ENCODE measurements at regions of chr1 and their contacts with region 1.

Region 1: DNA sequence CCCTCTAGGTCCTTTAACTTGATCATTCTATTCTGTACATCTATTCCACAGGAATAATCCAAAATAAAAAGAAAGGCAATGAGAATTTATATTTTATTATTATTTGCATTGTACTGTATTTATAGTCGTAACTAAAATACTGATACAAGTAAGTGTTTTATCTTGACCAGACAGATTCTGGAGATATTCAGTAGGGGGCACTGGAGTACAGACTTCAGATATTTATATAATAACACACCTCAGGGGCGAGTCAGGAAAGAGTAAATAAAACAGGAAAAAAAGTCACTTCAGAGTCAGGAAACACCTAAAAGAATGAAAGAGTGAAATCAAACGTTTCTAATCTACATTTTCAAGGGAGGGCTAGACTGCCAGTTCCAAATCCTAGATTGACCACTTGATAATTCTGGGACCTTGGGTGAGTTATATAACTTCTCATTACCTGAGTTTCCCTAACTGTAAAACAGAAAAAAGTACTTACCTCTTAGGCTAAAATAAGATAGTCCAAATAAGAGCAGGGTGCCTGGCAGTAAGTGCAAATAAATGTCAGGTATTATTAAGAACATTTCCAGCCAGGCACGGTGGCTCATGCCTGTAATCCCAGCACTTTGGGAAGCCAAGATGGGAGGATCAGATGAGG is 31.1 kb upstream of the MTF1 start:
- DNase-seq: peak; percentile 69 to 80 (median 77)
- H3K4me3 ChIP-seq: no peak overlapping the region
- H3K27ac ChIP-seq: no peak overlapping the region
- H3K4me1 ChIP-seq: peaks cover 0 to 17% (median 3%) of the 10 kb centered on the region in 4 experiments
- H3K27me3 ChIP-seq: no peaks in the 10 kb centered on the region

Region 2: DNA sequence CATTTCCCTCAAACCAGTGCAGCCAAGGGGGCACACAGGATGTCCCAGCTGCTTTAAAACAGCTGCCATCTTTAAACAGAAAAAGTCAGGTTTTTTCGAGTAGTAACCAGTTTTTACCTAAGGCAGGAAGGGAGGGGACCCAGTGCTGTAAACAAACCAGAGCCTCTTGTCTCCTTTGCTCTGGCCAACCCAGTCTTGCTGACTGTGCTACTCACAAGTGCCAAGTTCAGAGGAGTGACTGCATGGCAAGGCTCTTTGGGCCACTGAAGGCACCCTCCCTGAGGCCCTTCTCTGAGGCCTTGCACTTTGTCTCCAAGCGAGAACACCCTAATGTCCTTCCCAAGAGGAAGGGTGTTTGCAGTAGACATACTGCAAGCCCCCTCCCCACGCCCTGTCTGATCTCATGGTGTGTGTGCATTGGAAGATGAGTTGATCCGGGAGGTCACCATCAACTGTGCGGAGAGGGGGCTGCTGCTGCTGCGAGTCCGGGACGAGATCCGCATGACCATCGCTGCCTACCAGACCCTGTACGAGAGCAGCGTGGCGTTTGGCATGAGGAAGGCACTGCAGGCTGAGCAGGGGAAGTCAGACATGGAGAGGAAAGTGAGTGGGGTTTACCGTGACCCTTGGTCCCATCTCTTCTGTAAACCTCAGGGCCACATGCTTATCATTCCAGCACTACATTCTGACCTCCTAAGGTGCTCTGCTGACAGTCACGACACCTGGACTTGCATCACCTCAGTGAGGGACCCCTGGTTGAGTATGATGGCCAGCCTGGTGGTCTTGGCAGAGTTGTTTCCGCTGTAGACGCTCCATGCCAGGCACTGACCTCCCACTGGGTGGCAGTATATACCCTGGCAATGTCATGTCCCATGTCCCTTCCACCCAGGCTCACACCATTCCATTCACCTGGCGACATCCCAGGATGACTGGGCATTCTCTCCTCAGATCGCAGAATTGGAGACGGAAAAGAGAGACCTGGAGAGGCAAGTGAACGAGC is 329.1 kb before region 1 on chr1:
- CTCF ChIA-PET with region 1: no interaction called
- POLR2A ChIA-PET with region 1: no interaction called
- DNase-seq: peak in 2 of 3 donors; percentile 19 to 31
- H3K4me3 ChIP-seq: no peak overlapping the region
- H3K27ac ChIP-seq: no peak overlapping the region
- H3K4me1 ChIP-seq: peaks cover 0 to 4% (median 1%) of the 10 kb centered on the region in 4 experiments
- H3K27me3 ChIP-seq: peaks cover 0 to 6% (median 0%) of the 10 kb centered on the region in 5 experiments

Region 3: DNA sequence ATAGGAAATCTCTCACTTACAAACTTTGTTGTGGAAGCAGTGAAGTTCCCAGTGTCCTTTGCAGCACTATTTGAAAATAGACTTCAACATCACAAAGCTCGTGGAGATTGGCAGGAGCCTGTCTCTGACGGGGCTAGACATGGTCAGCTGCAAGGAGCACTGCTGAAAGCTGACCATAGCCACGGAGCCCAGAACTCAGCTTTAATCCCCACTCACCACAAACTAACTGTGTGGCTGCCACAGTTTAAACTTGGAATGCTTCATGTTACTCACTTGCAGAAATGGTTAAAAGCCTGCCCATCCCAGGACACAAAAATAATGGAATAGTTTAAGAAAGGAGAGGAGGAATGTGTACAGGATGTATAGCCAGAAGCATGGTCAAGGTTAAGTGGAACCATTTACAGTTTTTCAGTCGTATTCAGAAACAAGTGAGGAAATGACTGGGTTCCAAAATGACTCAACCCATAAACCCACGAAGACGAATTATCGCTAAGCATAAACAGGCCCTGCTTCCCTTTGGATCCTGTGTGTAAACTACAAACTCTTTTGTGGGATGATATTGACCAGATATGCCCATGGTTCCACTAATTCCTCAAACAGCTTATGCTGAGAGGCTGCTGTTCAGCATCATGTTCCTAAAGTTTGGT is 315.5 kb before region 1 on chr1:
- CTCF ChIA-PET with region 1: no interaction called
- POLR2A ChIA-PET with region 1: no interaction called
- DNase-seq: no peak
- H3K4me3 ChIP-seq: no peak overlapping the region
- H3K27ac ChIP-seq: no peak overlapping the region
- H3K4me1 ChIP-seq: no peaks in the 10 kb centered on the region
- H3K27me3 ChIP-seq: no peaks in the 10 kb centered on the region

Region 4: DNA sequence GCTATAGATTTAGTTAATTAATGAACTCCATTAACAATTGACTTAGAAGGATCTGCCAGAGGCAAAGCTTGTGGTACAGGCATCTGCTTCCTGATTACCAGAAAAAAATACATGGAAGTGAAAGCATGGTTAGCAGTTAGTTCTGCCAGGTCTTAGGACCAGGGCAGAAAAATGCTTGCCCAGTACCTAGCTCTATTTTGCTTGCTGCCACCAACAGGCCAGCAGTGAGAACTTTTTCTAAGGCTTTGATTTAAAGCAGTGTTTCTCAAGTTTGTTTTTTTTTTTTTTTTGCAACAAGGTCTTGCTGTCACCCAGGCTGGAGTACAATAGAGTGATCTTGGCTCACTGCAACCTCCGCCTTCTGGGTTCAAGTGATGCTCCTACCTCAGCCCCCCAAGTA is 14.7 kb before region 1 on chr1:
- CTCF ChIA-PET with region 1: interaction called, 10 read pairs
- POLR2A ChIA-PET with region 1: interaction called, 5 read pairs
- DNase-seq: peak in 2 of 3 donors; percentile 31 to 34
- H3K4me3 ChIP-seq: no peak overlapping the region
- H3K27ac ChIP-seq: no peak overlapping the region
- H3K4me1 ChIP-seq: no peaks in the 10 kb centered on the region
- H3K27me3 ChIP-seq: no peaks in the 10 kb centered on the region

Region 5: GRCh38 chr1:37919277-37919676 is 28.8 kb after region 1 on chr1:
- CTCF ChIA-PET with region 1: interaction called, 10 read pairs
- POLR2A ChIA-PET with region 1: no interaction called
- DNase-seq: peak; percentile 52 to 68 (median 68)
- H3K4me3 ChIP-seq: no peak overlapping the region
- H3K27ac ChIP-seq: no peak overlapping the region
- H3K4me1 ChIP-seq: peaks cover 5 to 58% (median 41%) of the 10 kb centered on the region in 4 experiments
- H3K27me3 ChIP-seq: no peaks in the 10 kb centered on the region

Measured in common myeloid progenitor, CD34-positive (primary cell).